ENCODE measurements at regions of chr17 and their contacts with region 1.

Region 1: DNA sequence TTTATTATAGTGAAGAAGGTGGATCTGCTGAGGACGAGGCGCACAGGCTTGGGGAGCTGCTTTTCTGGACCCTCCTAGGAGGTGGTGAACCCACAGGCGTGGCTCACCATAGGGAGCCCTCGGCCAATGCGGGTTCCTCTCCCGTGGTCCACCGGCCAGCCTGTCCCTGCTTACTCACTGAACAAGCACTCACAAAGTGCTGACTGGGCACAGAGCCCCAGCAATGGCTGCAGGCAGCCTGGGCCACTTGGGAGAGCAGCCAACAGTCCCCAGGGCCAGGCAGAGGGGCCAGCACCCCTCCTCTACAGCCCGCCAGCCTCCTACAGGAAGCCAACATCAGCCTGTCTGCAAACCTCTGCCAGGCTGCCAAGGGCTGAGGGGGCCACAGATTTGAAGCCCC is 19.1 kb upstream of the NCBP3 start:
- DNase-seq: no peak
- H3K4me3 ChIP-seq: no peak overlapping the region
- H3K27ac ChIP-seq: no peak overlapping the region
- H3K4me1 ChIP-seq: no peaks in the 10 kb centered on the region
- H3K27me3 ChIP-seq: no peaks in the 10 kb centered on the region
- CTCF ChIP-seq: no peak
- EP300 ChIP-seq: no peak
- POLR2A ChIP-seq: no peak

Region 2: GRCh38 chr17:3780986-3781385 is 84.2 kb before region 1 on chr17:
- intact Hi-C with region 1: no loop called
- DNase-seq: no peak
- H3K4me3 ChIP-seq: no peak overlapping the region
- H3K27ac ChIP-seq: no peak overlapping the region
- H3K4me1 ChIP-seq: no peaks in the 10 kb centered on the region
- H3K27me3 ChIP-seq: no peaks in the 10 kb centered on the region
- CTCF ChIP-seq: no peak
- EP300 ChIP-seq: no peak
- POLR2A ChIP-seq: no peak

Region 3: DNA sequence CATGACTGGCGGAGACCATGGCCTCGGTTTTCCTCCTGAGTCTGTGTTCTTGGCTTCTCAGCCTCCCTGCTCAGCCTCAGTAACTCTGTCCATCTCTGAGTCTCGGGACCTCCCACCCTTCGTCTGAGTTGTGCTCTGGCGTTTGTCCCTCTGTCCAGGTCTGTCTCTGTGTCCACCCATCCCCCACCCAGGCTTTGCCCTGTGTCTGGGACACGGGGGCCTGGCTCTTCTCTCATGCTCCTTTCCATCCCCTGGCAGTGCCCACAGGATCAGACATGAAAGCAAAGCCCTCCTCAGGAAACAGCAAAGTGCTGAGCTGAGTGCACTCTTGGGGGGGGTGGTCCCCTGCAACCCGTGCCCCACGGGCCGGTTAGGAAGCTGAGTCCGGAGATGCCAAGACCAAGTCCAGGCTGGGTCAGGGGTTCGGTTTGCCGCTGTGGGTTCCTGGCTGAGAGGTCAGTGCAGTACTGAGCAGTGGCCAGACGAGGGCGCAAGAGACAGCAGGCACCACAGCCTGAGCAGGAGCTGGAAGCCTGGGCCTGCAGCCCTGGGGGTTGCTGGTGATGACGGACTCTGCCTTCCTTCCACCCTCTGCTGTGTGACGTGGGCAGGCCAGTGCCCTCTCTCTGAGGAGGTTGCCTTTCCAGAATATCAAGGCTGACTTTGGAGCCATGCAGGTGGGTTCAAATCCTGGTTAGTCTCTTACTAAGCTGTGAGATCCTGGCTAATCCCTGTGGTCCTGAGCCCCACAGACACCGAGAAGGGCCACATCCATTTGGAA is 48.5 kb after region 1 on chr17:
- intact Hi-C with region 1: loop called in 1 of 4 experiments (anchors 10 kb)
- DNase-seq: peak; percentile 70 to 87 (median 81)
- H3K4me3 ChIP-seq: no peak overlapping the region
- H3K27ac ChIP-seq: no peak overlapping the region
- H3K4me1 ChIP-seq: peaks cover 12% of the 10 kb centered on the region
- H3K27me3 ChIP-seq: no peaks in the 10 kb centered on the region
- CTCF ChIP-seq: peak; percentile 86 to 96 (median 92)
- EP300 ChIP-seq: no peak
- POLR2A ChIP-seq: no peak

Measured in ovary (tissue), 10 donors.